Activated T-helper 1 cell treated with anti-CD3 and anti-CD28 coated beads, Interleukin-12 subunit alpha, Interleukin-12 subunit beta, Interleukin-2, Interleukin-4 antibody, amounts not matched to agents 30 ng/mL and 10 ng/mL and 1 ng/mL, durations not matched to agents 14 hours and 24 hours and 36 hours (primary cell): ENCODE measurements at regions of chr7 and their contacts with region 1.

Region 1: GRCh38 chr7:151351027-151351426 is 9.4 kb downstream of the NUB1 start:
- DNase-seq: no peak
- H3K4me3 Mint-ChIP-seq: peak overlapping the region; percentile 65
- H3K27ac Mint-ChIP-seq: peak overlapping the region; percentile 93
- H3K4me1 Mint-ChIP-seq: peaks cover 39% of the 10 kb centered on the region
- H3K27me3 Mint-ChIP-seq: no peaks in the 10 kb centered on the region

Region 2: DNA sequence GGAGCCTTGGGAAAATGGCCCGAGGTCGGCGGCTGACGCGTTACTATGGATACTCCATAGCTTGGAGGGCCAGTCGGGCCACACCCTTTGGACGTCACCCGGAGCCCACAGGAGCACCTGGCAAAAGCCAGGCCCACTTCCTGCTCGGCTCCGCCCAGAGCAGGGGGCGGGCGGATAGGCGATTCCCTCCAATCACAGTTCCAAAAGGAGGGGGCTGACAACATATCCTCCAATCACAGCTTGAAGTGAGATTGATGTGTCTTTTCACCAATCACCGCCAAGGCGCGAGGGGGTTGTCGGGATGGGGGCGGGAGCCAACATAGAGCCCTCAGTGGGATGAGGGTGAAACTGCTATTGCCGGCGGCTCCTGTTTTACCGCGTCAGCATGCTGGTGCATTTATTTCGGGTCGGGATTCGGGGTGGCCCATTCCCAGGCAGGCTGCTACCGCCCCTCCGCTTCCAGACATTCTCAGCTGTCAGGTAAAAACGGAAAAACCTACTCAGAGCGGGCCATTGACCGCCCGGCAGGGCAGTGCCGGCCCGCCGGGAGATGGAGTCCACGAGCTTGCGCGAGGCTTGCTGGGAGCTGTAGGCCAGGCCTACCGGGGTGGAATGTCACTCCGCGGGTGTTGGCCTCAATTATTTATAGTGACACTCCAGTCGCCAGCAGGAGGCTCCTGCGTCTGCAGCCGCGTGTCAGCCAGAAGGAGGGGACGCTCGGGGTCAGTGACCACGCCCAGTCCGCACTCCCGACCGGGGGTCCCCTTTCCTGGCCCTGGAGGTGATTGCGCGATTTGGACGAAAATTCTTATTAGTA is 322.7 kb before region 1 on chr7 and contains the start of gene ABCB8:
- intact Hi-C with region 1: loop called (anchors 5 kb)
- DNase-seq: peak; percentile 98
- H3K4me3 Mint-ChIP-seq: peak within 1 kb of the TSS; percentile 94
- H3K27ac Mint-ChIP-seq: peak within 1 kb of the TSS; percentile 95
- H3K4me1 Mint-ChIP-seq: peaks cover 21% of the 10 kb centered on the region
- H3K27me3 Mint-ChIP-seq: peaks cover 2% of the 10 kb centered on the region
- total RNA-seq, gene ABCB8: 56.9 and 57.9 TPM in 2 replicates

Region 3: GRCh38 chr7:151244196-151244840 is 106.7 kb before region 1 on chr7:
- intact Hi-C with region 1: loop called (anchors 1 kb)
- DNase-seq: peak; percentile 49
- H3K4me3 Mint-ChIP-seq: peak overlapping the region; percentile 49
- H3K27ac Mint-ChIP-seq: no peak overlapping the region
- H3K4me1 Mint-ChIP-seq: peaks cover 26% of the 10 kb centered on the region
- H3K27me3 Mint-ChIP-seq: peaks cover 32% of the 10 kb centered on the region

Region 4: GRCh38 chr7:151408839-151409666 is 58.0 kb after region 1 on chr7:
- intact Hi-C with region 1: loop called (anchors 1 kb)
- DNase-seq: peak; percentile 17
- H3K4me3 Mint-ChIP-seq: peak overlapping the region; percentile 71
- H3K27ac Mint-ChIP-seq: no peak overlapping the region
- H3K4me1 Mint-ChIP-seq: peaks cover 17% of the 10 kb centered on the region
- H3K27me3 Mint-ChIP-seq: peaks cover 44% of the 10 kb centered on the region

Region 5: DNA sequence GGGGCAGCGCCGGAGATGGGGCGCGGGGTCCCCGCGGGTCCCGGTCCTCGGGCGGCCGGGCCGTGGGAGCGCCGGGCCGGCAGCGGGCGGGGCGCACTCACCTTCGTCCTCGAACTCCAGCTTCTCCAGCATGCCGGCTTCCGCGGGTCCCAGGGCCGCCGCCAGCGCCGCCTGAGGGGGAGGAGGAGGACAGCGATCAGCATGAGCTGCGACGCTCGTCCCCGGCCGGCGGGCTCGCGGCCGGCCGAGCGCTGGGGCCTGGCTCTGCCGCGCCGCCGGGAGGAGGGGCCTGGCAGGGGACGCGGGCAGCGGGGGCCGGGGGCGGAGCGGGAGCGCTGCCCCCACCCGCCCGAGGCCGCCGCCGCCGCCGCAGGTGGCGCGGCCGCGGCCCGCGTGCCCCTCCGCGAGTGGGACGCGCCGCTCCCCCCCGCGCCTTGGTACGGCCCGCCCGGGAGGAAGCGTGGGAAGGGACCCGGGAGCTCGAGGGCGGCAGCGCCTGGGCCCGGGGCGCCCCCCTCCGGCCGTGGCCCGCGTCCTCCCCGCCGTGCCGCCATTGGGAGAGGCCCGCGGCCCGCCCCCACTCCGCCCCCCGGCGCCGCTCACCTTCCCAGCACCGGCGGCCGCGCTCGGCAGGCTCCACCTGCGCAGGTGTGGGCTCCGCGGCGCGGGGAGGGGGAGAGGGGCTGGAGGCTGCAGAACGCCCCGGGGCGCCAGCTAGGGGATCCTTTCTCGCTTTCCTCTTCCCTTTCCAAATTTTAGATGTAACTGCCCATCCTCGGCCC is 281.1 kb after region 1 on chr7:
- intact Hi-C with region 1: loop called (anchors 2 kb)
- DNase-seq: peak; percentile 85
- H3K4me3 Mint-ChIP-seq: peak overlapping the region; percentile 94
- H3K27ac Mint-ChIP-seq: peak overlapping the region; percentile 96
- H3K4me1 Mint-ChIP-seq: peaks cover 23% of the 10 kb centered on the region
- H3K27me3 Mint-ChIP-seq: peaks cover 9% of the 10 kb centered on the region